Breast epithelium (tissue), 4 donors: ENCODE measurements at regions of chr9 and their contacts with region 1.

Region 1: GRCh38 chr9:70589571-70590314 is 175.3 kb upstream of the KLF9 start:
- DNase-seq: peak in 1 of 2 donors; percentile 39
- H3K4me3 ChIP-seq: peak overlapping the region in 1 of 3 donors; percentile 32
- H3K27ac ChIP-seq: peak overlapping the region; percentile 75 to 89
- H3K4me1 ChIP-seq: peaks cover 6 to 9% of the 10 kb centered on the region in 2 donors
- H3K27me3 ChIP-seq: no peaks in the 10 kb centered on the region
- CTCF ChIP-seq: peak in 1 of 3 donors; percentile 7
- POLR2A ChIP-seq: no peak

Region 2: GRCh38 chr9:70413798-70414775 is 175.7 kb before region 1 on chr9 and contains the start of gene KLF9:
- intact Hi-C with region 1: loop called (anchors 10 kb)
- DNase-seq: peak; percentile 93 to 98
- H3K4me3 ChIP-seq: peak within 1 kb of the TSS; percentile 79 to 98 (median 98)
- H3K27ac ChIP-seq: peak within 1 kb of the TSS; percentile 98 to 100
- H3K4me1 ChIP-seq: peaks cover 0 to 11% of the 10 kb centered on the region in 2 donors
- H3K27me3 ChIP-seq: no peaks in the 10 kb centered on the region
- CTCF ChIP-seq: peak in 1 of 3 donors; percentile 23
- POLR2A ChIP-seq: peak; percentile 94
- total RNA-seq, gene KLF9: 129 to 223 (median 206) TPM

Region 3: DNA sequence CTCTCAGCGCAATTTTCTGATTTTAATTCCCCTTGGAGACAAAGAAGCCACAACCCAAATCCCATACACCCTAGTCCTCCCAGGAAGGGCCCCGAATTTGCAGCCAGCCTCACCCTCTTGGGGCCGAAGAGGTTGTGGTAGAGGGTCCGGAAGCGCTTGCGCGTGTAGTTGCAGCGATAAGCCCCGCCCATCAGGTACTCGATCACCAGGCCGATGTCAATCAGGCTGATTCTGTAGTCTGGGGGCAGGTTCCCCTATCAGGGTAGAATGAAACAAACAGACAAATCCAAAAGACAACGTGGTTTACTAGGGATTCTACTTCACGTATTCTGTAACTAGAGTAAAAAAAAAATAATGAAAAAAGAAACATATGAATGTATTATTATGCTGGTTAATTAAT is 35.3 kb after region 1 on chr9:
- intact Hi-C with region 1: no loop called
- DNase-seq: no peak
- H3K4me3 ChIP-seq: no peak overlapping the region
- H3K27ac ChIP-seq: no peak overlapping the region
- H3K4me1 ChIP-seq: no peaks in the 10 kb centered on the region
- H3K27me3 ChIP-seq: no peaks in the 10 kb centered on the region
- CTCF ChIP-seq: no peak
- POLR2A ChIP-seq: no peak